Common myeloid progenitor, CD34-positive (primary cell): ENCODE measurements at regions of chr16 and their contacts with region 1.

Region 1: GRCh38 chr16:30557957-30558788 is at the start of gene ZNF764:
- DNase-seq: peak; percentile 97 to 98 (median 98)
- H3K4me3 ChIP-seq: peak within 1 kb of the TSS; percentile 70 to 88 (median 81)
- H3K27ac ChIP-seq: peak within 1 kb of the TSS; percentile 84 to 97
- H3K4me1 ChIP-seq: peaks cover 0 to 32% (median 26%) of the 10 kb centered on the region in 4 experiments
- H3K27me3 ChIP-seq: no peaks in the 10 kb centered on the region

Region 2: GRCh38 chr16:30534368-30535105 is 23.6 kb before region 1 on chr16 and contains the start of gene ZNF747:
- CTCF ChIA-PET with region 1: interaction called, 29 read pairs
- POLR2A ChIA-PET with region 1: interaction called, 17 read pairs
- DNase-seq: peak; percentile 85 to 91 (median 90)
- H3K4me3 ChIP-seq: peak within 1 kb of the TSS; percentile 61 to 92 (median 78)
- H3K27ac ChIP-seq: peak within 1 kb of the TSS; percentile 78 to 91
- H3K4me1 ChIP-seq: peaks cover 4 to 35% (median 29%) of the 10 kb centered on the region in 4 experiments
- H3K27me3 ChIP-seq: no peaks in the 10 kb centered on the region

Region 3: DNA sequence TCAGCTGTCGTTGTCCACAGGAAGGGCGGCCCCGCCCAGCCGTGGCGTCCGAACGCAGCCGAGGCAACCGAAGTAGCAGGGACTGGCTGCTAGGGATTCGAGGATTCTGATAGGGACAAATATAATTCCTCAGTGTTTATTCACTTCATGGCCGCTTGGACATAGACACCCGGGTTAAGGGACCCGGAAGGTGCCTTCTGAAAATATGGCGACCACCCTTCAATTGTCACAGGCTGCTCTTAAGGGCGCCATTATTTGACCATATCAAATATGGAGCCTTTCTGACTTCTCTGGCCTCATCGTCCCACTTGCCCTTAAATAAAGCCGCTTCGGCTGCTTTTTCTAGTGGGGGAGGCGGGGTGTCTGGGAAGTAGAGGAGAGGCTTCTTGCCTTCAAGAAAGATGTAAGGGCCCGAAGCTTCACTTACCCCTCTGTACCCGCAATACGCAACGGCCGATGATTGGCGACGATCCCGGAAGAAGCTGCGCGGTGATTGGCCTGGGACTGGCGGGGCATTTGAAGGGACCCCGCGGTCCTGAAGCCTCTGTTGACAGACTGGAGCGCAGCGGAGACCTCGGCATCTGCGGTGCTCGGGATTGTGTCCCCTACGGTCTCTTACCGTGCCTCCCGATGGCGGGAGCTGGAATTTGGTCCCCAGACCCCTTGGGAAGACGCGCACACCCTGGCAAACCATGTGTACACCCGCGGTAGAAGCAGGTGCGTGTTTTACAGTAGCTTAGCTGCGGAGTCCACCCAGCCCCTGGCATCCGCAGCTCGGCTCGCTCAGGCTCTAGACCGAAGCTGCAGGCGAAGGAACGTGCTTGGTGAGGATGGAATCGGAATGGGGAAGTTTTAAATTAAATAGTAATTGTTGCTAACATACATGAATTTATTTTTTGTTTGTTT is 13.8 kb after region 1 on chr16 and contains the start of gene ZNF688:
- CTCF ChIA-PET with region 1: interaction called, 4 read pairs
- POLR2A ChIA-PET with region 1: interaction called, 12 read pairs
- DNase-seq: peak; percentile 99 to 100 (median 99)
- H3K4me3 ChIP-seq: peak within 1 kb of the TSS; percentile 71 to 93 (median 86)
- H3K27ac ChIP-seq: peak within 1 kb of the TSS; percentile 90 to 94
- H3K4me1 ChIP-seq: peaks cover 7 to 56% (median 36%) of the 10 kb centered on the region in 4 experiments
- H3K27me3 ChIP-seq: no peaks in the 10 kb centered on the region

Region 4: DNA sequence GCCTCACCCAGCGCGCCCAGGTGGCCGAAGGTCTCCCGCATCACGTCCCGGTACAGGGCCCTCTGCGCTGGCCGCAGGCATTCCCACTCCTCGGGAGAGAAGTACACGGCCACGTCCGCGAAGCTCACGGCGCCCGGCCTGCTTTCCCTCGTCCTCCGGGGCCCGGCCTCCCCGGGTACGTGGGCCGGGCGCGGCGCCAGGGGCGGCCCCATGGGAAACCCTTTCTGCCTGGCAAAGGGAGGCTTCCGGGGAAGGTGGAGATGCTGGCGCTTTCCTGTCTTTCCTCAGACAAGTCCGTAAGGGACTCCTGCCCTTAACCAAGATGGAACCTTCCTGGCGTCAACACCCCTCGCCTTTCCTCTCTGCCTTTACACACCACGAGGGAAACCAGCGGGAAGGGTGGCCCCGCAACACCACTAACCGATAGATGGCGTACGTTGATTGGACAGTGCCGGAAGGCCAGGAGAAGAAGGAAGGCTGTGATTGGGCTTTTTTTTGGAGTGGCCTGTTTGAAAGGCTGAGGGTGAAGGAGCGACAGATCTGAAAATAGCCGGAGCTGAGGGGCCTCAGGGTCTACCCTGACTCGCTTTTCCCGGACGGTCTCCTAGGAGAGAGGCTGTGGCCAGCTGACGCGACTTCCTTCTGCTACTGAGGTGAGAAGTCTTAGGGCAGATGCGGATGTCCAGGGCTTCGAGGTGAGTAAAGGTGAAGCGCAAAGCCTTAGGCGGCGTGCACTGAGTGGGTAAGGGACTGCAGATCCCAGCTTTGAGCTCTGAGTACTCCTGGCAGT is 27.4 kb after region 1 on chr16 and contains the start of gene ZNF785:
- CTCF ChIA-PET with region 1: interaction called, 13 read pairs
- POLR2A ChIA-PET with region 1: interaction called, 3 read pairs
- DNase-seq: peak; percentile 96 to 98 (median 97)
- H3K4me3 ChIP-seq: peak within 1 kb of the TSS; percentile 60 to 86 (median 76)
- H3K27ac ChIP-seq: peak within 1 kb of the TSS; percentile 74 to 90
- H3K4me1 ChIP-seq: peaks cover 0 to 20% (median 18%) of the 10 kb centered on the region in 4 experiments
- H3K27me3 ChIP-seq: no peaks in the 10 kb centered on the region